ENCODE measurements at regions of chr21 and their contacts with region 1.

Region 1: GRCh38 chr21:42537106-42537742 is 23.6 kb downstream of the SLC37A1 start:
- DNase-seq: peak in 2 of 10 donors; percentile 32 to 66

Region 2: DNA sequence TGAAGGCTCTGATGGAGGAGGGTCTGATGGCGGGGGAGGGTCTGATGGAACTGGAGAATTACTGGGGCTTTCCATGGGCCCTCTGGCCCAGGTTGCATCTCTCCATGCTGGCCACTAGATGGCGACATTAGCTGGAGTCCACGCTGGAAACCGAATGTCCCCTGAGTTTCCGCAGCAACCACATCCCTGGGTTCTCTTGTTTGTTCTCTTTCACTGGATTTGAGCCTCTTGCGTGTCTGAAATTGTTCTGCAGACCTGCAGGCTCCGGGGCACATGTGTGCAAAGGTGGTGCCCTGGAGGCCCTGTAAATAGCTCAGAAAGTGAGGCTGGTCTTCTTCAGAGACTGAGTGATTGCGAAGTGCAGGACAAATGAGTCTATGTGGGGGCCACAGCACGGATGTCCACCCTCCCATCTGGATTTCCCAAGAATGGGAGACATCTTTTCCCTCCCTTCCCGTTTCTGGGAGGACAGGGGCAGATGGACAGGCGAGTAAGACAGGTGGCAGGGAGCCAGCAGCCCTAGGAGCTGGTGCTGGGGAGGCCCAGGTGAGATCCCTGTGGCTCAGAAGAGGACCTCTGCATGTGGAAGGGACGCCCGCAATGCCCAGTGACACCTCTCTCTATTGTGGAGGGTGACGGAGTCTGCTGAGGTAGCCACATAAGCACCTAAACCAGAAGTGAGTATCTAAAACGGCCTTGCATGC is 391.5 kb before region 1 on chr21:
- intact Hi-C with region 1: loop called (anchors 10 kb)
- DNase-seq: peak; percentile 35 to 96 (median 68)

Measured in posterior cingulate gyrus (tissue), 11 donors.